ENCODE measurements at regions of chr3 and their contacts with region 1.

Region 1: DNA sequence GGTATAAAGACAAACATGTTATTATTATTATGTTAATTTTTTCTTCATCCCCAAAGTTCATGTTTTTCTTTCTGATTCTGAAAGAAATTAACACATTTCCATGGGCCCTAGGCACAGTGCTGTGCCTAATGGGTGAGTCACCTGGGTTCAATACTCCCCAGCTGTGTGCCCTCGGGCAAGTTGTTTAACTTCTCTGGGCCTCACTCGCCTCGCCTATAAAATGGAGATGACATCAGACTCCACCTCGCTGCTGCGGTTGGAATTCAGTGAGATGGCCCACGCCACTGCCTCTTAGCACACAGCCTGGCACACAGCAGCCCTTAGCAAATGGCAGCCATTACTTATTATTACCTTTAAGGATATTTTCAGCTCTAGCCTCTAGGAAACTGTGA is 22.6 kb downstream of the DNASE1L3 start:
- DNase-seq: no peak
- ATAC-seq: no peak
- H3K4me3 ChIP-seq: no peak overlapping the region
- H3K27ac ChIP-seq: peak overlapping the region; percentile 84
- H3K4me1 ChIP-seq: peaks cover 90% of the 10 kb centered on the region
- H3K27me3 ChIP-seq: no peaks in the 10 kb centered on the region
- CTCF ChIP-seq: no peak
- EP300 ChIP-seq: no peak
- POLR2A ChIP-seq: no peak
- RAD21 ChIP-seq: no peak

Region 2: DNA sequence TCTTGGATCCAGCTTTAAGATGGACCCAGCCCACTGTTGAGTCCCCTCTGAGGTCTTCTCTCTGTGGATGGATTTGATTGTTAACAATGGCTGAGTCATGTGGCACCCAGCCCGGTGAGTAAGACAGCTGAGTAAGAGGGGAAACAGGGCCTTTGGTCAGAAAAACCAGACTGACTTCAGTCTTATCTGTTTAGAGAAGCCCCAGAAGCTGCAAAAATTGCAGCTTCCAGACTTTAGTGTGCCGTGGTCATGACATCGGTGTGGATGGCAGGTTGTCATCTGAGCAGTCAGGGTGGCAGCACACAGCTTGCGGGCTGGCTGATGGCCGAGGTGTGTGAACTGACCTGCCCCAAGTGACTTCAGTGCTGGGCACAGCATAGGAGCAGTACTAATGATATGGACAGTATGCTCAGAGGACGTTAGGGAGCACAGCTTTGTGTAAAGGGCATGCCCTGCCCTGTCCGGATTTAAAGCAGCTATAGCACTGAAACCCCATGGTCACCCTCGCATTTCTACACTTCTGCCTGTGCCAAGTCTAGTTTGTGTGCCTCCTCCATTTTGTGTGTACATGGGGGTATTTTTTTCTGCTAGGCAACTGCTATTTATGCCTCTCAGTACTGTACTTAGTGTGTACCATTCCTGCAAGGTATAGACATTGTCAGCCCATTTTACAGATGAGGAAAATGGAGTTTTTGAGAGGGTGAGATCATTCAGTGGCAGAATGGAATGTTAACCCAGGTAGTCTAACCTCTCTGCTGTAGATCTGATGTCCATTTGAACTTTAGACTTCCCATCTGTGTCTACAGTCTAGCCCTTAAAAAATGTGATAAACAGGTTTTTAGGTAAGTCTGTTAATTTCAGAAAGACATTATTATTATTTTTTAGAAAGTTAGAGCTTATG is 135.5 kb before region 1 on chr3:
- CTCF ChIA-PET with region 1: no interaction called
- POLR2A ChIA-PET with region 1: no interaction called
- in situ Hi-C with region 1: no loop called
- intact Hi-C with region 1: no loop called
- DNase-seq: peak; percentile 83
- ATAC-seq: peak; percentile 42
- H3K4me3 ChIP-seq: peak overlapping the region in 1 of 3 experiments; percentile 20; a peak in 1 of 6 replicates
- H3K27ac ChIP-seq: peak overlapping the region; percentile 96
- H3K4me1 ChIP-seq: peaks cover 96% of the 10 kb centered on the region
- H3K27me3 ChIP-seq: no peaks in the 10 kb centered on the region
- CTCF ChIP-seq: no peak
- EP300 ChIP-seq: peak in 1 of 2 experiments; percentile 64; a peak in 1 of 4 replicates
- POLR2A ChIP-seq: no peak
- RAD21 ChIP-seq: no peak

Region 3: GRCh38 chr3:58237238-58237940 is 49.2 kb after region 1 on chr3 and contains the start of gene ABHD6:
- CTCF ChIA-PET with region 1: no interaction called
- POLR2A ChIA-PET with region 1: interaction called, 3 read pairs
- in situ Hi-C with region 1: loop called (anchors 5 kb)
- intact Hi-C with region 1: no loop called
- DNase-seq: peak; percentile 40
- ATAC-seq: peak; percentile 84
- H3K4me3 ChIP-seq: peak within 1 kb of the TSS; percentile 89 to 95 (median 93)
- H3K27ac ChIP-seq: peak within 1 kb of the TSS; percentile 44
- H3K4me1 ChIP-seq: peaks cover 68% of the 10 kb centered on the region
- H3K27me3 ChIP-seq: peaks cover 1 to 11% of the 10 kb centered on the region in 2 experiments; a peak in 3 of 5 replicates
- CTCF ChIP-seq: peak; percentile 76
- EP300 ChIP-seq: no peak
- POLR2A ChIP-seq: peak in 1 of 2 experiments; percentile 61; a peak in 1 of 4 replicates
- RAD21 ChIP-seq: peak; percentile 83
- total RNA-seq, gene ABHD6: 5.7 and 9.0 TPM in 2 replicates

Region 4: GRCh38 chr3:58271901-58272501 is 83.8 kb after region 1 on chr3:
- CTCF ChIA-PET with region 1: no interaction called
- POLR2A ChIA-PET with region 1: no interaction called
- in situ Hi-C with region 1: no loop called
- intact Hi-C with region 1: no loop called
- DNase-seq: no peak
- ATAC-seq: no peak
- H3K4me3 ChIP-seq: no peak overlapping the region
- H3K27ac ChIP-seq: no peak overlapping the region
- H3K4me1 ChIP-seq: 0 out of 2 replicates have a peak, but pooled peaks cover 6% of the 10 kb centered on the region
- H3K27me3 ChIP-seq: no peaks in the 10 kb centered on the region
- CTCF ChIP-seq: no peak
- EP300 ChIP-seq: no peak
- POLR2A ChIP-seq: no peak
- RAD21 ChIP-seq: no peak

Region 5: DNA sequence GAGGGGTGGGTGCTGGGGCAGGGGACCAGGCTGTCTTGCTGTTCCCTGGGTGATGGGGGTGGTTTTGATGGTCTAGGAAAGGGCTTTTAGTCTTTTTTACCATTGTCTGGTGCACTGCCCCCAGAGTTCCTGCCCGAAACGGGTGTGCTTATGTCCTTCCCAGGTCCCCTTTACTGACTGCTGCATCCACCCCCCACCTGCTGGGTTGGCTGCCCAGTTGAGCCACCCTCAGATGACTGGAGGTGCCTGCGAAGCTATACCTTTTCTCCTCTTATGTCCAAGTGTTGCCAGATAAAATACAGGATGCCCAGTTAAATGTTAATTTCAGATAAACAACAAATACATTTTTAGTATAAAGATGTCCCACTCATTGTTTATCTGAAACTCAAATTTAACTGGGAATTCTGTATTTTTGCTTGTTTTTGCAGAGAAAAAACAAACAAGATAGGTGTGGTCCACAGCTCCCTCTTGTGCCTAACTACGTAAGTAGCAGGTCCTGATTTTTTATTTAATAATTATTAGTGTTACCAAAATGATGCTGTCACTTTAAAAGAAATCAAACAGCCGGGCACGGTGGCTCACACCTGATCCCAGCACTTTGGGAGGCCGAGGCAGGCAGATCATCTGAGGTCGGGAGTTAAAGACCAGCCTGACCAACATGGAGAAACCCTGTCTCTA is 111.8 kb after region 1 on chr3:
- CTCF ChIA-PET with region 1: interaction called, 38 read pairs
- POLR2A ChIA-PET with region 1: interaction called, 3 read pairs
- in situ Hi-C with region 1: loop called (anchors 5 kb)
- intact Hi-C with region 1: loop called (anchors 1 kb)
- DNase-seq: peak; percentile 25
- ATAC-seq: no peak
- H3K4me3 ChIP-seq: no peak overlapping the region
- H3K27ac ChIP-seq: no peak overlapping the region
- H3K4me1 ChIP-seq: peaks cover 21% of the 10 kb centered on the region
- H3K27me3 ChIP-seq: 0 out of 5 replicates have a peak, but pooled peaks cover 0 to 3% of the 10 kb centered on the region in 2 experiments
- CTCF ChIP-seq: peak; percentile 66
- EP300 ChIP-seq: no peak
- POLR2A ChIP-seq: no peak
- RAD21 ChIP-seq: peak; percentile 63

Region 6: GRCh38 chr3:58414538-58415197 is 226.5 kb after region 1 on chr3:
- CTCF ChIA-PET with region 1: no interaction called
- POLR2A ChIA-PET with region 1: no interaction called
- in situ Hi-C with region 1: loop called (anchors 10 kb)
- intact Hi-C with region 1: loop called (anchors 5 kb)
- DNase-seq: peak; percentile 38
- ATAC-seq: peak; percentile 32; the same call in 1 of the 3 replicates
- H3K4me3 ChIP-seq: no peak overlapping the region
- H3K27ac ChIP-seq: no peak overlapping the region
- H3K4me1 ChIP-seq: peaks cover 22% of the 10 kb centered on the region
- H3K27me3 ChIP-seq: no peaks in the 10 kb centered on the region
- CTCF ChIP-seq: peak; percentile 68
- EP300 ChIP-seq: no peak
- POLR2A ChIP-seq: no peak
- RAD21 ChIP-seq: peak; percentile 60

Measured in HepG2 (cell line).